Activated T-helper 1 cell treated with anti-CD3 and anti-CD28 coated beads, Interleukin-12 subunit alpha, Interleukin-12 subunit beta, Interleukin-2, Interleukin-4 antibody, amounts not matched to agents 30 ng/mL and 10 ng/mL and 1 ng/mL, durations not matched to agents 14 hours and 24 hours and 36 hours (primary cell): ENCODE measurements at regions of chr10 and their contacts with region 1.

Region 1: GRCh38 chr10:73743905-73744663 is at the start of gene SEC24C:
- DNase-seq: peak; percentile 93
- H3K4me3 Mint-ChIP-seq: peak within 1 kb of the TSS; percentile 97
- H3K27ac Mint-ChIP-seq: peak within 1 kb of the TSS; percentile 98
- H3K4me1 Mint-ChIP-seq: peaks cover 32% of the 10 kb centered on the region
- H3K27me3 Mint-ChIP-seq: no peaks in the 10 kb centered on the region
- total RNA-seq, gene SEC24C: 112 and 114 TPM in 2 replicates

Region 2: GRCh38 chr10:73096449-73097304 is 647.4 kb before region 1 on chr10 and contains the start of gene P4HA1:
- intact Hi-C with region 1: loop called (anchors 5 kb)
- DNase-seq: peak; percentile 97
- H3K4me3 Mint-ChIP-seq: peak within 1 kb of the TSS; percentile 96
- H3K27ac Mint-ChIP-seq: peak within 1 kb of the TSS; percentile 94
- H3K4me1 Mint-ChIP-seq: peaks cover 46% of the 10 kb centered on the region
- H3K27me3 Mint-ChIP-seq: peaks cover 2% of the 10 kb centered on the region
- total RNA-seq, gene P4HA1: 52.8 and 54.5 TPM in 2 replicates

Region 3: GRCh38 chr10:73263948-73264347 is 480.1 kb before region 1 on chr10:
- intact Hi-C with region 1: no loop called
- DNase-seq: no peak
- H3K4me3 Mint-ChIP-seq: no peak overlapping the region
- H3K27ac Mint-ChIP-seq: no peak overlapping the region
- H3K4me1 Mint-ChIP-seq: peaks cover 10% of the 10 kb centered on the region
- H3K27me3 Mint-ChIP-seq: peaks cover 15% of the 10 kb centered on the region

Region 4: GRCh38 chr10:73730153-73730906 is 13.8 kb before region 1 on chr10:
- intact Hi-C with region 1: loop called (anchors 1 kb)
- DNase-seq: peak; percentile 92
- H3K4me3 Mint-ChIP-seq: peak overlapping the region; percentile 95
- H3K27ac Mint-ChIP-seq: peak overlapping the region; percentile 97
- H3K4me1 Mint-ChIP-seq: peaks cover 10% of the 10 kb centered on the region
- H3K27me3 Mint-ChIP-seq: peaks cover 2% of the 10 kb centered on the region

Region 5: GRCh38 chr10:73772280-73773151 is 28.4 kb after region 1 on chr10:
- intact Hi-C with region 1: loop called (anchors 1 kb)
- DNase-seq: peak; percentile 85
- H3K4me3 Mint-ChIP-seq: peak overlapping the region; percentile 94
- H3K27ac Mint-ChIP-seq: peak overlapping the region; percentile 91
- H3K4me1 Mint-ChIP-seq: peaks cover 67% of the 10 kb centered on the region
- H3K27me3 Mint-ChIP-seq: no peaks in the 10 kb centered on the region

Region 6: DNA sequence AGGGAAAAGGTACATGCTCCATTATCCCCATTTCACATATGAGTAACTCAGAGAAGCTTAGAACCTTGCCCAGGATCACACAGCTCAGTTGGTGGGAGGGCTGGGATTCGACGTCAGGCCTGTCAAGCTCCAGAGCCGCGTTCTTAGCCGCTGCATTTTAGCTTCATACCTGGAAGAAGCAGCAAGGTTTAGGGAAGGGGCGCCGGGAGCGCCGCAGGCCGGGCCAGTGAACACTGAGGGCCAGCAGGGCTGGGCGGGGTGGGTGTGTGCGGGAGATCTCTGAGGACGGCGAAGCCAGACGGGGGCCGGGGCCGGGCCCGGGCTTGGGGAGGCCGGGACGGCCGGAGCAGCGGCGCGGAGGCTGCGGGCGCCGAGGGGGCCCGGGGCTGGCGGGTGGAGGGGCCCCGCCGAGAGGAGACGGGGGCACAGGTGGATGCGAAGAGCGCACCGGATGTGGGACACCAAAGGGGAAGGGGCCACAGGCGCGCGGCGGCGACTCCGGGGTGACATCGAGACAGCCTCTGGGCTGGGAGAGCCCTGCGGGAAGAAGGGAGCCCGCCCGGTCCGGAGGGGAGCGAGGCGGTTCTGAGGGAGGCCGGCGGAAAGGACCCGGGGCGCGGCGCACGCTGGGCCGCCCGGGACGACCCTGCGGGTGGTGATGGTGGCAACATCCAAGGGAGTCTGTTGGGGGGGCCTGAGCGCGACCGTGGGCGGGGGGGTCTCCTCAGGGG is 66.8 kb after region 1 on chr10:
- intact Hi-C with region 1: loop called (anchors 2 kb)
- DNase-seq: peak; percentile 54
- H3K4me3 Mint-ChIP-seq: peak overlapping the region; percentile 97
- H3K27ac Mint-ChIP-seq: peak overlapping the region; percentile 98
- H3K4me1 Mint-ChIP-seq: peaks cover 50% of the 10 kb centered on the region
- H3K27me3 Mint-ChIP-seq: no peaks in the 10 kb centered on the region

Region 7: GRCh38 chr10:73983096-73984047 is 239.3 kb after region 1 on chr10:
- intact Hi-C with region 1: no loop called
- DNase-seq: no peak
- H3K4me3 Mint-ChIP-seq: no peak overlapping the region
- H3K27ac Mint-ChIP-seq: no peak overlapping the region
- H3K4me1 Mint-ChIP-seq: no peaks in the 10 kb centered on the region
- H3K27me3 Mint-ChIP-seq: peaks cover 22% of the 10 kb centered on the region